Caco-2 (cell line): ENCODE measurements at regions of chr20 and their contacts with region 1.

Region 1: DNA sequence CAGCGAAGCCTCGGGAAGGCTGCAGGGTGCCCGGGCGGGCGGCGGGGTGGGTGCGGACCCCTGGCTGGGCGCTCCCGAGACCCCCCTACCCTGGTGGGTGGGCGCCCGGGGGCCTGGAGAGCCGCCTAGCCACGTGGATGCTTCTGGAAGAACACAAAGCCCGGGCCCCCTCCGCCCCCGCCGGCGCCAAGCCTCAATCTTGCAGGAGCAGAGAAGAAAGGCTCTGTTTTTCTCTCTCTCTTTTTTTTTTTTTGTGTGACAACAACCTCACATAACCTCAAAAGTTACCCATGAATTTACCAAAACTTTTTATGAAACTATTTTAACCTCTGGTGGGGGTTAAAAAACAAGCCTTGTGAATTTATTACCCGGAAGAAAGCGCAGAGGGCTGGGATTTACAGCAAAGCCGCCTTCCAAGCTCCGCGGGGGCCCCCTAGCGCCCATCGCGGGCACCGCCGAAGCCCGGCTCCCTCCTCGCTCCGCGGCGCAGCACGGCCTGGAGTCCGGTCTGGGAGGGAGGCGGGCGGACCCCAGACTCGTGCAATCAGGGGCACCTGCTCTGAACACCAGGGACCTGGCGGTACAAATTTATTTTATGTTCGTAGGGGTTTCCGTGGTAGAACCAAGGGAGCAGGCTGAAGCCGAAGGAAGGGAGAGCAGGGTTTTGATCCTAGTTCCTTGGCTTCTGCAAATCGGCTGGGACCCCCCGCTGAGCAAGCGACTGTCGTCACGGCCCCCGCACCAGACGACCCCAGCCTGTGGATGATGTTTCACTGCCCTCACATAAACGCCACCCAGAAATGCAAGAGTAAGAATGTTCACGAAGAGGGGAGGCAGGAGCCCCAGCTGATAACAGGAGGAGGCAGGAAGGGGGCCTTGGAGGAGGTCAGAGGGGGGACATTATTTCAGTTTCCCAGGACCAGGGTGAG is 58.9 kb downstream of the ZNF831 start:
- DNase-seq: peak; percentile 86 to 98
- H3K4me3 ChIP-seq: peak overlapping the region; percentile 57
- H3K4me3 Mint-ChIP-seq: peak overlapping the region; percentile 75
- H3K27ac Mint-ChIP-seq: peak overlapping the region; percentile 62
- H3K4me1 ChIP-seq: peaks cover 6% of the 10 kb centered on the region; the same call in 1 of the 2 replicates
- H3K4me1 Mint-ChIP-seq: peaks cover 10% of the 10 kb centered on the region
- H3K27me3 ChIP-seq: peaks cover 2% of the 10 kb centered on the region; the same call in 1 of the 2 replicates
- H3K27me3 Mint-ChIP-seq: peaks cover 15% of the 10 kb centered on the region
- CTCF ChIP-seq: peak; percentile 99

Region 2: GRCh38 chr20:58870239-58871014 is 352.1 kb before region 1 on chr20:
- CTCF ChIA-PET with region 1: interaction called, 24 read pairs
- POLR2A ChIA-PET with region 1: no interaction called
- intact Hi-C with region 1: loop called (anchors 1 kb)
- DNase-seq: peak; percentile 83 to 93
- H3K4me3 ChIP-seq: no peak overlapping the region
- H3K4me3 Mint-ChIP-seq: no peak overlapping the region
- H3K27ac Mint-ChIP-seq: no peak overlapping the region
- H3K4me1 ChIP-seq: no peaks in the 10 kb centered on the region
- H3K4me1 Mint-ChIP-seq: peaks cover 6% of the 10 kb centered on the region
- H3K27me3 ChIP-seq: no peaks in the 10 kb centered on the region
- H3K27me3 Mint-ChIP-seq: peaks cover 17% of the 10 kb centered on the region
- CTCF ChIP-seq: peak; percentile 98 to 100

Region 3: DNA sequence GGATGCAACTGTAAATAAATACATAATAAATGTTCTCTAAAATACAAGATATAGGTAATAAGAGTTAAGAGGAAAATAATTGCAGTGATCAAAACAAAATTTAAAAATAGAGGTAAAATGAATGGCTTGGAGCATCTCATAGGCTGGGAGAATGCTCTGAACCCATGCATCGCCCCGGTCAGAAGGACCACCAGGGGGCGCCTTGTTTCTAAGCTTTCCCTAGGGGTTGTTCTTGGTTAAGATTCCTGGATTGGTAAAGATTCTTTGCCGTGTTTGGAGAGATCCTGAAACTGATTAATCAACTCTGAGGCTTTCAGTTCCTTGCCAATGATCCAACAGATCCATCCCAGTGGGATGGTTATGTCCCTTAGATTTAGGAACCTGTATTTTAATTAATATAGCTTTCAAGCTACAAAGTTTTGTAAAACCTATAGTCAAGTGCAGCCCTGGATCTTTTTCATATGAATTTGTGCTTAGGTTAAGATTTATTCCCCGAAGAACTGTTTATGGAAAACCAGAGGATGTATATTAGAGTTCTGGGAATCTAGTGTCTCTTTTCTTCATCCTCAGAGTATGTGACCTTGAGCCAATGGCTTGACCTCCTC is 134.6 kb before region 1 on chr20:
- CTCF ChIA-PET with region 1: interaction called, 39 read pairs
- POLR2A ChIA-PET with region 1: interaction called, 3 read pairs
- intact Hi-C with region 1: loop called (anchors 1 kb)
- DNase-seq: peak; percentile 86 to 93
- H3K4me3 ChIP-seq: no peak overlapping the region
- H3K4me3 Mint-ChIP-seq: no peak overlapping the region
- H3K27ac Mint-ChIP-seq: no peak overlapping the region
- H3K4me1 ChIP-seq: peaks cover under 1% of the 10 kb centered on the region; the same call in 1 of the 2 replicates
- H3K4me1 Mint-ChIP-seq: no peaks in the 10 kb centered on the region
- H3K27me3 ChIP-seq: 0 out of 2 replicates have a peak, but pooled peaks cover 1% of the 10 kb centered on the region
- H3K27me3 Mint-ChIP-seq: peaks cover 31% of the 10 kb centered on the region
- CTCF ChIP-seq: peak; percentile 99

Region 4: DNA sequence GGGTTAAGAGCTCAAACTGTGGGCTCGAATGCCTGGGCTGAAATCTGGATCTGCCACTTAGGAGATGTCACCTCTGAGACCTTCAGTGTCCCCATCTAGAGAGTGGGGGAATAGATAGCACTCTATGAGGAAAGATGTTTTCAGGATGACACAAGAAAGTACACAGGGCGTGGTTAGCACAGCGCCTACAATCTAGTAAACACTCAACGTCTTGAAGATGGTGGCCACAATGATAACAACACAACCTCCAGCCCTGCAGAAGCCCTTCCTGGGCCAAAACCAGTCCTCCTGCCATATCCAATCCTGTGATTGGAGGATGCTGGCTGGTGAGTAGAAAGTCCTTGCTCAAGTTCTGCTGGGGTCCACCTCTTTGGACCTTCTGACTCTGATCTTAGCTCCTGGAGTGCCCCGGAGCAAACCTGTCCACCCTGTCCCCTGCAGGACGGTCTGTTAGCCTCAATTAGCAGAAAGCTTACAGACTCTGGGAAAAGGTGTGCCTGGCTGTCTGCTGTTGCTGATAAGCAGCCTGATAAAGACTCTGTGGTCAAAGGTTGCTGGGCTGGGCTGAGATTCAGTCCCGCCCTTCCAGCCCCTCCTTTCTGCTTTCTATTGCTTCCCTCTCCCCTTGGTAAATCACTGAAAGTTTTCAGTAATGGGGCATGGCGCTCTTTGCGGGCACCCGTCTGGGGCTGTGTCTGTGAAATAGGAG is 86.1 kb after region 1 on chr20:
- CTCF ChIA-PET with region 1: interaction called, 4 read pairs
- POLR2A ChIA-PET with region 1: no interaction called
- intact Hi-C with region 1: loop called (anchors 5 kb)
- DNase-seq: peak; percentile 91 to 95
- H3K4me3 ChIP-seq: no peak overlapping the region
- H3K4me3 Mint-ChIP-seq: peak overlapping the region; percentile 55
- H3K27ac Mint-ChIP-seq: peak overlapping the region; percentile 42
- H3K4me1 ChIP-seq: peaks cover 28% of the 10 kb centered on the region
- H3K4me1 Mint-ChIP-seq: peaks cover 34% of the 10 kb centered on the region
- H3K27me3 ChIP-seq: no peaks in the 10 kb centered on the region
- H3K27me3 Mint-ChIP-seq: peaks cover 5% of the 10 kb centered on the region
- CTCF ChIP-seq: peak; percentile 27 to 57

Region 5: DNA sequence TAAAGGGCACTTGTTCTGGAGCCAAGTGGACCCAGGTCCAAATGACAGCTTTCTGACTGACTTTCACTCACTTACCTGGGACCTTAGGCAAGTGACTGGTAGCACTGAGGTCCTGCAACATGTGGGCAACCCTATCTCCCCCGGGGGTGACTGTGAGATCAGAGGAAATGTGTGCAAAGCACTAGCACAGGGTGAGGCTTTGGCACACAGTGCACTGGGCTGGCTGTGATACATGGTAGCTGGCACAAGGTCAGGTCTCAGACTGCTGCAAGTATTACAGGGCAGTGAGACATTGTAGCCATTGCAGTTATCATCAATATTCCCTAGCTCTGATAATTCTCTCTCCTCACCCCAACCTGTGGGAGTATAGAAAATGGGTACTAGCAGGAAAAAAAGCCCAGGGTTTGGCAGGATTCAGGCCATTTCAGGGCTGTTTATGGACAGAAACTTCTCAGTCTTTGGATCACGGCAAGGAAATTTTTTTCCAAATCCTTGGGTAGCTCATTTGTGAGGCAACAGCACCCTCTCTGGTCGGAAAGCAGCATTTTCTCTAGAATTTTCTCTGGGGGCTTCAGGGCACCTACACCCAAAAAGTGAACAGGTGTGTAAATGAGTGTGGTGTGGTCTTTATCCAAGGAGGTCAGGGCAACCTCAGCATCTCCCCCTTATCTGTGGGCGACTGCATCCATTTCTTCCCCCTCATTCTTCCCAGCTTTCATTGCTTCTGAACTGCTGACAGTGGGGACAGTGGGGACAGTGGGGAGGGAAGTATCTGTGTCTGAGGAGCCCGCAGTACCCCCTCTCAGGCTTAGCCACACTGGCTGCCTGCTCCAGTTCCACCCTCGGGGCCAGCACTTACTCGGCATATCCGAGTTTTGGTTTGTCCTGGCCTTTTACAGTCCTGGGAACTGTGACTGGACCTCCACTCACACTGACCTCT is 233.2 kb after region 1 on chr20:
- CTCF ChIA-PET with region 1: interaction called, 21 read pairs
- POLR2A ChIA-PET with region 1: no interaction called
- intact Hi-C with region 1: loop called (anchors 1 kb)
- DNase-seq: peak in 1 of 2 experiments; percentile 52
- H3K4me3 ChIP-seq: no peak overlapping the region
- H3K4me3 Mint-ChIP-seq: no peak overlapping the region
- H3K27ac Mint-ChIP-seq: no peak overlapping the region
- H3K4me1 ChIP-seq: peaks cover 10% of the 10 kb centered on the region; the same call in 1 of the 2 replicates
- H3K4me1 Mint-ChIP-seq: no peaks in the 10 kb centered on the region
- H3K27me3 ChIP-seq: no peaks in the 10 kb centered on the region
- H3K27me3 Mint-ChIP-seq: peaks cover 17% of the 10 kb centered on the region
- CTCF ChIP-seq: peak; percentile 86 to 91